ENCODE measurements at regions of chr10 and their contacts with region 1.

Region 1: DNA sequence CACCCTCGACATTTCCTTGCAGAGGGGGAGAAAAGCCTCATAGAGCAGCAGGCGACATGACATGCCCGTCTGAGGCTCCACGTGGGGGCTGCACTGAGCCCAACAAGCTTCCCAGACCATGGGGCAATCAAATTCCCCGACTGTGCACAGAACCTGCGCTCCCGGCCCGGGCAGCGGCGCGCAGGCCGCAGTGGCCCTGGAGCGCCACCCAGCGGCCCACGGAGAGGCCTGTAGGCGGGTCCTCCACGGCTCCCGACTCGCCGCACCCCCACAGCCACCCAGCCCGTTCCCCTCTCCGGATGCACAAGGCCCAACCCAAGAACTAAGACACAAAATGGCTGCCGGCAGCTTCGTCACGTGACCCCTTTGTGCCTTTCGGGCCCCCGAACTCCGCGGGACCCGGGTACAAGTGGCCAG is 816 bp downstream of the EPC1 start:
- DNase-seq: peak in 8 of 9 donors; percentile 93 to 98 (median 97)
- ATAC-seq: peak; percentile 92
- H3K4me3 ChIP-seq: peak overlapping the region; percentile 98
- H3K4me3 Mint-ChIP-seq: peak overlapping the region; percentile 86 to 97 (median 93)
- H3K27ac ChIP-seq: peak overlapping the region; percentile 99
- H3K27ac Mint-ChIP-seq: peak overlapping the region; percentile 99 to 100 (median 100)
- H3K4me1 ChIP-seq: peaks cover 42 to 50% of the 10 kb centered on the region in 2 donors
- H3K4me1 Mint-ChIP-seq: peaks cover 35 to 77% (median 73%) of the 10 kb centered on the region in 7 donors
- H3K27me3 ChIP-seq: no peaks in the 10 kb centered on the region
- H3K27me3 Mint-ChIP-seq: no peaks in the 10 kb centered on the region

Region 2: DNA sequence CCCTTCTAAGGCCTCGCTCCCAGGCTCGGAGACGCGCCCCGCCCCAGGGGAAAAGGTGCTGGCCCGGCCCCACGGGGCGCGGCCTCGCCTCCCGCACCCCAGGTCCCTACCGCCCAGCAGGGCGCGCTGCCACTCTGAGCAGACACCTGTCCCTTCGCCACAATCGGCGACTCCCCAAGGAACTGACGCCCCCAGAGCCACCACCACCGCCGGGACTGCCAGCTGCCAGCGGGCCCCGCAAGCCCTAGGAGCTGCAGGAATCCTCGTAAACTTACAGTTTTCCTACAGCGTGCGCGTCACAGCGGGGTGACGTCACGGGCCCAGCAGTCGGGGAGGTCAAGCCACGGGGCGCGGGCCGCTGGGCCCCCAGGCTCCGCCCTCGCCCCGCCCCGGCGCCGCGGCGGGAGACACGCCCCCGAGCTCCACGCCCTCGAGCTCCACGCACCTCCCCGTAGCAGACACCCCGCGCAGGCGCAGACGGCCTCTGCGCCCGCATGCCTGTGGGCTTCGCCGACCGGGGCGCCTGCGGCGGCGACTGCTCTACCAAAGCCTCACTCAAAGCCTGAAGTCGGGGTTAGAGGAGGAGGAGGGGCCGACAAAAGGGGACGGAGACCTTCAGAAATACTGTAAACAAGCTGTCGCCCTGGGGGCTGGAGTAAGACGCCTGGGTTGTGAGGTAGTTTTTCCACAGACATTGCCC is 1314.4 kb before region 1 on chr10 and contains the start of gene ZNF438:
- CTCF ChIA-PET with region 1: no interaction called
- POLR2A ChIA-PET with region 1: no interaction called
- intact Hi-C with region 1: loop called in 1 of 2 experiments (anchors 5 kb)
- DNase-seq: peak; percentile 93 to 99 (median 96)
- ATAC-seq: peak; percentile 92
- H3K4me3 ChIP-seq: peak within 1 kb of the TSS; percentile 84
- H3K4me3 Mint-ChIP-seq: peak within 1 kb of the TSS; percentile 89 to 94 (median 92)
- H3K27ac ChIP-seq: peak within 1 kb of the TSS; percentile 96
- H3K27ac Mint-ChIP-seq: peak within 1 kb of the TSS; percentile 93 to 99 (median 99)
- H3K4me1 ChIP-seq: peaks cover 5% of the 10 kb centered on the region in 2 donors
- H3K4me1 Mint-ChIP-seq: peaks cover 7 to 34% (median 14%) of the 10 kb centered on the region in 7 donors
- H3K27me3 ChIP-seq: no peaks in the 10 kb centered on the region
- H3K27me3 Mint-ChIP-seq: no peaks in the 10 kb centered on the region
- total RNA-seq, gene ZNF438: 3.9 to 5.8 (median 4.0) TPM

Region 3: GRCh38 chr10:32190890-32191491 is 155.2 kb before region 1 on chr10:
- CTCF ChIA-PET with region 1: no interaction called
- POLR2A ChIA-PET with region 1: interaction called, 3 read pairs
- intact Hi-C with region 1: loop called (anchors 1 kb)
- DNase-seq: peak in 6 of 9 donors; percentile 17 to 49 (median 42)
- ATAC-seq: peak; percentile 70
- H3K4me3 ChIP-seq: no peak overlapping the region
- H3K4me3 Mint-ChIP-seq: no peak overlapping the region
- H3K27ac ChIP-seq: no peak overlapping the region
- H3K27ac Mint-ChIP-seq: peak overlapping the region in 1 of 9 donors; percentile 3
- H3K4me1 ChIP-seq: no peaks in the 10 kb centered on the region
- H3K4me1 Mint-ChIP-seq: peaks cover 0 to 5% (median 4%) of the 10 kb centered on the region in 7 donors
- H3K27me3 ChIP-seq: no peaks in the 10 kb centered on the region
- H3K27me3 Mint-ChIP-seq: peaks cover 0 to 9% (median 0%) of the 10 kb centered on the region in 5 donors

Region 4: GRCh38 chr10:32298054-32298812 is 47.9 kb before region 1 on chr10:
- CTCF ChIA-PET with region 1: no interaction called
- POLR2A ChIA-PET with region 1: no interaction called
- intact Hi-C with region 1: no loop called
- DNase-seq: no peak
- ATAC-seq: no peak
- H3K4me3 ChIP-seq: no peak overlapping the region
- H3K4me3 Mint-ChIP-seq: peak overlapping the region in 7 of 10 donors; percentile 25 to 69 (median 48)
- H3K27ac ChIP-seq: no peak overlapping the region
- H3K27ac Mint-ChIP-seq: peak overlapping the region in 7 of 9 donors; percentile 34 to 91 (median 73)
- H3K4me1 ChIP-seq: peaks cover 0 to 32% of the 10 kb centered on the region in 2 donors
- H3K4me1 Mint-ChIP-seq: peaks cover 38 to 91% (median 75%) of the 10 kb centered on the region in 7 donors
- H3K27me3 ChIP-seq: no peaks in the 10 kb centered on the region
- H3K27me3 Mint-ChIP-seq: no peaks in the 10 kb centered on the region

Region 5: DNA sequence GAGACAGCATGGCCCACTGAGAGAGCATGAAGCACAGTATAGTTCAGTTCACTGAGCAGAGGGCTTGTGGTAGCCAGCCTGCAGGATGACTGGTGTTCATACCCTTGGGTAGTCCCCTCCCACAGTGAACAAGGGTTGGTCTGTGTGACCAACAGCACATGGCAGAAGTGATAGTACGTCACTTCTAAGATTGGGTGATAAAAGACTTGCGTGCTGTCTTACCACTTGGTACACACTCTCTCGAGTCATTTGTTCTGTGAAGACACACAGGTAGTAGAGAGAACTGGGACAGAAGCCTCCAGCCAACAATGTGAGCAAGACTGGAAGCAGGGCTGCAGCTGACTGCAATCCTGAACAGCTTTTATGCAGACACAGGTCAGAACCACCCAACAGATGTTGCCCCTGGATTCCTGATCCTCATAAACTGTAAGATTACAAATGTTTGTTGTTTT is 13.8 kb before region 1 on chr10:
- CTCF ChIA-PET with region 1: interaction called, 4 read pairs
- POLR2A ChIA-PET with region 1: interaction called, 7 read pairs
- intact Hi-C with region 1: loop called (anchors 1 kb)
- DNase-seq: peak; percentile 16 to 92 (median 71)
- ATAC-seq: peak; percentile 96
- H3K4me3 ChIP-seq: no peak overlapping the region
- H3K4me3 Mint-ChIP-seq: peak overlapping the region; percentile 52 to 84 (median 70)
- H3K27ac ChIP-seq: peak overlapping the region; percentile 56
- H3K27ac Mint-ChIP-seq: peak overlapping the region; percentile 41 to 95 (median 85)
- H3K4me1 ChIP-seq: peaks cover 80 to 84% of the 10 kb centered on the region in 2 donors
- H3K4me1 Mint-ChIP-seq: peaks cover 78 to 98% (median 94%) of the 10 kb centered on the region in 7 donors
- H3K27me3 ChIP-seq: no peaks in the 10 kb centered on the region
- H3K27me3 Mint-ChIP-seq: no peaks in the 10 kb centered on the region

Region 6: DNA sequence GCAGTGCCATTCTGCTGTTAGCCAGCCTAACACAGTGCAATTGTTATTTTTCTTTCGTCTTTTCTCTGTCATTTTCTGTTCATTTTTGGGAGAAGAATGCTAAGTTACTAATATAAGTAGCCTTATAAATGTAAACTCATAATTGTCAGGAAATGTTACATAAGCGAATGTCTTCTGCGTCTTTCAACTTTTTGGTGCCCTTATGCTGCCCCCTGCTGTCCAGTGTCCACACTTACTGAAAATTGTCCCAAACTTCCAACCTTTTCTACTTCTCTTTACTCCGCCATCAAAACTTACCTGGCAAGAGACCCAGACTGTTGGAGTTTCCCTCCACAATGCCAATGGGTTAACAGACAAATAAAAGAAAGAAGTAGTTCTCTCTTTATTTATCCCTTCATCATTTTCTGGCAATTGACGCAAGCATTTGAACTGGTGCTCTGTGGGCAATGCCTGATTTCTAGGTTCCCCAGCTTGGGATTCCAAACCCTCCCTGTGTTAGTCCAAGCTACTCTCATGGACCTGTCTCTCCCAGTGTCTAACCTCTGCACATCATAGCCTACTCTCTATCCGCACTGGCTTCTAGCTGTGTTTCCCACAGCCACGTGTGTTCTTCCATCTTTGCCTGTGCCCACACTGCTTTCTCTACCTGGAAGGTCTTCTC is 21.8 kb after region 1 on chr10:
- CTCF ChIA-PET with region 1: interaction called, 7 read pairs
- POLR2A ChIA-PET with region 1: interaction called, 9 read pairs
- intact Hi-C with region 1: loop called (anchors 1 kb)
- DNase-seq: peak; percentile 44 to 79 (median 73)
- ATAC-seq: peak; percentile 92
- H3K4me3 ChIP-seq: no peak overlapping the region
- H3K4me3 Mint-ChIP-seq: peak overlapping the region; percentile 11 to 85 (median 64)
- H3K27ac ChIP-seq: peak overlapping the region; percentile 41
- H3K27ac Mint-ChIP-seq: peak overlapping the region; percentile 26 to 92 (median 75)
- H3K4me1 ChIP-seq: peaks cover 9 to 33% of the 10 kb centered on the region in 2 donors
- H3K4me1 Mint-ChIP-seq: peaks cover 29 to 91% (median 70%) of the 10 kb centered on the region in 7 donors
- H3K27me3 ChIP-seq: no peaks in the 10 kb centered on the region
- H3K27me3 Mint-ChIP-seq: no peaks in the 10 kb centered on the region

Region 7: GRCh38 chr10:32459051-32459698 is 113.0 kb after region 1 on chr10:
- CTCF ChIA-PET with region 1: no interaction called
- POLR2A ChIA-PET with region 1: interaction called, 5 read pairs
- intact Hi-C with region 1: loop called in 1 of 2 experiments (anchors 1 kb)
- DNase-seq: peak in 7 of 9 donors; percentile 76 to 90 (median 87)
- ATAC-seq: peak; percentile 100
- H3K4me3 ChIP-seq: peak overlapping the region; percentile 34
- H3K4me3 Mint-ChIP-seq: peak overlapping the region; percentile 48 to 79 (median 68)
- H3K27ac ChIP-seq: peak overlapping the region; percentile 43
- H3K27ac Mint-ChIP-seq: peak overlapping the region; percentile 73 to 92 (median 85)
- H3K4me1 ChIP-seq: peaks cover 31 to 35% of the 10 kb centered on the region in 2 donors
- H3K4me1 Mint-ChIP-seq: peaks cover 20 to 69% (median 61%) of the 10 kb centered on the region in 7 donors
- H3K27me3 ChIP-seq: no peaks in the 10 kb centered on the region
- H3K27me3 Mint-ChIP-seq: no peaks in the 10 kb centered on the region

Region 8: GRCh38 chr10:33139181-33139646 is 793.1 kb after region 1 on chr10:
- CTCF ChIA-PET with region 1: no interaction called
- POLR2A ChIA-PET with region 1: no interaction called
- intact Hi-C with region 1: loop called in 1 of 2 experiments (anchors 1 kb)
- DNase-seq: peak; percentile 63 to 97 (median 95)
- ATAC-seq: peak; percentile 90
- H3K4me3 ChIP-seq: peak overlapping the region; percentile 31
- H3K4me3 Mint-ChIP-seq: peak overlapping the region; percentile 71 to 87 (median 80)
- H3K27ac ChIP-seq: peak overlapping the region; percentile 65
- H3K27ac Mint-ChIP-seq: peak overlapping the region; percentile 92 to 100 (median 96)
- H3K4me1 ChIP-seq: peaks cover 41 to 65% of the 10 kb centered on the region in 2 donors
- H3K4me1 Mint-ChIP-seq: peaks cover 30 to 77% (median 67%) of the 10 kb centered on the region in 7 donors
- H3K27me3 ChIP-seq: no peaks in the 10 kb centered on the region
- H3K27me3 Mint-ChIP-seq: no peaks in the 10 kb centered on the region